Left ventricle myocardium superior (tissue), 1 donor: ENCODE measurements at regions of chr2 and their contacts with region 1.

Region 1: GRCh38 chr2:43226558-43226954 is at the start of gene ZFP36L2:
- DNase-seq: peak; percentile 99
- ATAC-seq: peak; percentile 80
- total RNA-seq, gene ZFP36L2: 55.0 TPM

Region 2: GRCh38 chr2:41933585-41934320 is 1292.8 kb before region 1 on chr2:
- intact Hi-C with region 1: no loop called
- DNase-seq: no peak
- ATAC-seq: peak; percentile 39

Region 3: GRCh38 chr2:42859006-42859552 is 367.5 kb before region 1 on chr2:
- intact Hi-C with region 1: loop called (anchors 10 kb)
- DNase-seq: no peak
- ATAC-seq: no peak

Region 4: DNA sequence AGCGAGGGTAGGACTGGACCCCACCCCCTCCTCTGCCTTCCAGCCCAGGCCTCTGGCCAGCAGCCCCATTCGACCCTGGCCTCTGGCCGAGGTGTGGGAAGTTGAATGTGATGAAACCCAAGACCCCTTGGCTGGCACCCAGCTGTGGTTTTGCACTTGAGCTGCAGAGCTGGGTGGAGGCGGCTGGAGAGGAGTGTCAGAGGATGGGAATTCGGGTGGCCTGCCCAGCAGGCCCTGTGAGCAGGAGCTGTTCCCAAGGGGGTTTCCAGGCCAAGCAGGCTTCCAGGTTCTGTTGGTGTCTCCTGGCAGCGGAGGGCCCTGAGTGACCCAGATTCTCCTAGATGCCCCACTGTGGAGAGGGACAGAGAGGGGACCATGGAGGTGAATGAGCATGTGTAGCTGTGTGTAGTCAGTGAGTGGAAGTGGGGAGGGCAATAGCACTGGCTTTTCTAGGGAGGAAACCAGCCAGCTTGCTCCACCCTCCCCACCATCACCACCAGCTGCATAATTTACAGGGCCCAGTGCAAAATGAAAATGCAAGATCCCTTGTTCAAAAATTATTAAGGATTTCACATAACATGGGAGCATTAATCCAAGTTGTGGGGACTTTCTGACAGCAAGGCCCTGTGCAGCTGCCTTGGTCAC is 262.0 kb before region 1 on chr2:
- intact Hi-C with region 1: no loop called
- DNase-seq: peak; percentile 85
- ATAC-seq: peak; percentile 50

Region 5: GRCh38 chr2:42974721-42975717 is 251.5 kb before region 1 on chr2:
- intact Hi-C with region 1: loop called (anchors 10 kb)
- DNase-seq: peak; percentile 89
- ATAC-seq: peak; percentile 90

Region 6: DNA sequence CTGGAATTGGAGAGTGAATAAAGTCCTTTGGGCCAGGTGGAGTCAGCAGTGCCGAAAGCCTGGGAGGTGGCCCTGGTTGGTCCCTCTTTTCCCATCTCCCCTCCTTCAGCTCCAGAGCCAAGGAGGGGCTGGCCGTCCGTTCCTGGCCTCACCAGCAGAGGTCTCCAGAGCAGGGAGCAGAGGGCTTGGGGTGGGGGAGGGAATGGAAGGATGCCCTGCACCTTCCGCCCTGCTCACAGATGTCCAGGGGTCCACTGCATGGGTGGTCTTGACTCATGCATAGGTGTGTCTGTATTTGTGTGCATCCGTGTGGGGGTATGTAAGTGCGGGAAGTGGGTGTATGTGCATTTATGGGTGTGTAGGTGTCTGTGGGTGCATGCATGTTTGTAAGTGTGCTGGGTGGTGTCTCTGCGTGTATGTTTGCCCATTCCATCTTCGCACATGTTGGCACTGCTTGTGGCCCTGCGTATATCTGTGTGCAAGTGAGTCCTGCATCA is 202.0 kb before region 1 on chr2:
- intact Hi-C with region 1: loop called (anchors 10 kb)
- DNase-seq: peak; percentile 80
- ATAC-seq: peak; percentile 78

Region 7: GRCh38 chr2:43131024-43131889 is 95.3 kb before region 1 on chr2:
- intact Hi-C with region 1: loop called (anchors 10 kb)
- DNase-seq: peak; percentile 78
- ATAC-seq: peak; percentile 63

Region 8: DNA sequence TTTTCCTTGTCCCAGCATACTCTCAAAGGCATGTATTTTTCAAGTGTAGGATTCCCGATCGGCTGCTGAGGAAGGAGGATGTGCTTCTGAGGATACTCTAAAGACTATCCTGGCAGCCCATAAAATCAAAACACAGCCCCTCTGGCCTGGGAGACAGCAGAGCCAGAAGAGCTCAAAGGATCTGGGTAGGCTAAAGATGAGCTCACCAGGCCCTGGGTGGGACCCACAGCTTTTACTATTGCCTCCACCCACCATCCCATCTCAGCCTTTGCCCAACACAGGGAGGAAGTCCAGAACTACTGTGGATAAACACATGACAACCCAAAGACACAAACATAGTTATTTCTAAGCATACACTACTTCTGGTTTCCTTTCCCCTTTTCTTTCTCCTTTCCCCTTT is 79.0 kb after region 1 on chr2:
- intact Hi-C with region 1: no loop called
- DNase-seq: peak; percentile 63
- ATAC-seq: peak; percentile 84

Region 9: GRCh38 chr2:43333656-43334144 is 107.1 kb after region 1 on chr2:
- intact Hi-C with region 1: no loop called
- DNase-seq: no peak
- ATAC-seq: peak; percentile 64

Region 10: GRCh38 chr2:43484323-43484930 is 257.9 kb after region 1 on chr2:
- intact Hi-C with region 1: loop called (anchors 2 kb)
- DNase-seq: no peak
- ATAC-seq: peak; percentile 55